CD8-positive, alpha-beta T cell (primary cell): ENCODE measurements at regions of chr9 and their contacts with region 1.

Region 1: GRCh38 chr9:94952565-94953373 is 226.3 kb downstream of the AOPEP start:
- DNase-seq: peak in 3 of 9 experiments; percentile 4 to 59 (median 15)
- ATAC-seq: peak; percentile 79
- H3K4me3 ChIP-seq: no peak overlapping the region
- H3K4me3 Mint-ChIP-seq: peak overlapping the region; percentile 61
- H3K27ac ChIP-seq: peak overlapping the region in 1 of 2 experiments; percentile 53
- H3K27ac Mint-ChIP-seq: peak overlapping the region; percentile 81
- H3K4me1 ChIP-seq: peaks cover 31% of the 10 kb centered on the region
- H3K4me1 Mint-ChIP-seq: peaks cover 37% of the 10 kb centered on the region
- H3K27me3 ChIP-seq: no peaks in the 10 kb centered on the region
- H3K27me3 Mint-ChIP-seq: no peaks in the 10 kb centered on the region
- CTCF ChIP-seq: no peak

Region 2: DNA sequence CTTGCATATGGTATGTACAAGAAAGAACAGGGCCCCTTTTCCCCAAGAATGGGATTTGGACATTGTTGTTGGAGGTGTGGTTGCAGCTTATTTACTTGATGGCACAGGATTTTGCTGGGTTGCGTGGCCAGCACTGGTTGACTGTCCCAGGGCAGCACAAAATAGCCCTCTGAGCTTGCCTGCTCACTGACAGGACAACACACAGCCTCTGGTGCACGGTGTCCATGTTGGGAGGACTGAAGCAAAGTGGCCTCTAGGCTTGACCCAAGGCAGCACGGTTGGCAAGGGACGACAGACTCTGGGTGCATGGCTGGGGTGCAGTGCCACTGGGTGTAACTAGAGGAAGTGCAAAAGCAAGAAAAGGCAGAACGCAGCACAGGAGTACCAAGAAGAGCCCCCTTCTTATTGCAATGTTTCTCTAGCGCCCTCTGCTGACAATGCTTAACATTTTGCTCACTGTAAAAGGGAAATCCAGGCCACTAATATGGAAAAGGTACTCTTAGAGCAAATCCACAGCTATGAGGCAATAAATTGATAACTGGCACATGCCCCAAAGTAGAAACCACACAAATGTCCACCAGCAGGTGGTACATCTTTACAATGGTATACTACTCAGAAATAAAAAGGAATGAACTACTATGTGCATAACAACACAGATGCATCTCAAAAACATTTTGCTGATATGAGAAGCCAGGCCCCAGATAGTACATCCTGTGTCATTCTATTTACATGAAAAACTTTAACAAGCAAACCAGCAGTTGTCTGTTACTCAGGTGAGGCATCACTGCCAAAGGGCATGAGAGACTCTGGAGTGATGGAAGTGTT is 950.2 kb before region 1 on chr9:
- CTCF ChIA-PET with region 1: no interaction called
- POLR2A ChIA-PET with region 1: no interaction called
- intact Hi-C with region 1: loop called in 1 of 2 experiments (anchors 5 kb)
- DNase-seq: peak in 3 of 9 experiments; percentile 19 to 49 (median 37)
- ATAC-seq: peak; percentile 29
- H3K4me3 ChIP-seq: no peak overlapping the region
- H3K4me3 Mint-ChIP-seq: no peak overlapping the region
- H3K27ac ChIP-seq: no peak overlapping the region
- H3K27ac Mint-ChIP-seq: no peak overlapping the region
- H3K4me1 ChIP-seq: no peaks in the 10 kb centered on the region
- H3K4me1 Mint-ChIP-seq: no peaks in the 10 kb centered on the region
- H3K27me3 ChIP-seq: no peaks in the 10 kb centered on the region
- H3K27me3 Mint-ChIP-seq: peaks cover 18% of the 10 kb centered on the region
- CTCF ChIP-seq: peak; percentile 35

Region 3: GRCh38 chr9:94870793-94871558 is 81.8 kb before region 1 on chr9:
- CTCF ChIA-PET with region 1: no interaction called
- POLR2A ChIA-PET with region 1: no interaction called
- intact Hi-C with region 1: loop called in 1 of 2 experiments (anchors 2 kb)
- DNase-seq: peak in 7 of 9 experiments; percentile 11 to 93 (median 47)
- ATAC-seq: peak; percentile 88
- H3K4me3 ChIP-seq: peak overlapping the region in 1 of 2 experiments; percentile 7
- H3K4me3 Mint-ChIP-seq: peak overlapping the region; percentile 59
- H3K27ac ChIP-seq: peak overlapping the region; percentile 26 to 55
- H3K27ac Mint-ChIP-seq: peak overlapping the region; percentile 94
- H3K4me1 ChIP-seq: peaks cover 26% of the 10 kb centered on the region
- H3K4me1 Mint-ChIP-seq: peaks cover 31% of the 10 kb centered on the region
- H3K27me3 ChIP-seq: no peaks in the 10 kb centered on the region
- H3K27me3 Mint-ChIP-seq: no peaks in the 10 kb centered on the region
- CTCF ChIP-seq: no peak

Region 4: DNA sequence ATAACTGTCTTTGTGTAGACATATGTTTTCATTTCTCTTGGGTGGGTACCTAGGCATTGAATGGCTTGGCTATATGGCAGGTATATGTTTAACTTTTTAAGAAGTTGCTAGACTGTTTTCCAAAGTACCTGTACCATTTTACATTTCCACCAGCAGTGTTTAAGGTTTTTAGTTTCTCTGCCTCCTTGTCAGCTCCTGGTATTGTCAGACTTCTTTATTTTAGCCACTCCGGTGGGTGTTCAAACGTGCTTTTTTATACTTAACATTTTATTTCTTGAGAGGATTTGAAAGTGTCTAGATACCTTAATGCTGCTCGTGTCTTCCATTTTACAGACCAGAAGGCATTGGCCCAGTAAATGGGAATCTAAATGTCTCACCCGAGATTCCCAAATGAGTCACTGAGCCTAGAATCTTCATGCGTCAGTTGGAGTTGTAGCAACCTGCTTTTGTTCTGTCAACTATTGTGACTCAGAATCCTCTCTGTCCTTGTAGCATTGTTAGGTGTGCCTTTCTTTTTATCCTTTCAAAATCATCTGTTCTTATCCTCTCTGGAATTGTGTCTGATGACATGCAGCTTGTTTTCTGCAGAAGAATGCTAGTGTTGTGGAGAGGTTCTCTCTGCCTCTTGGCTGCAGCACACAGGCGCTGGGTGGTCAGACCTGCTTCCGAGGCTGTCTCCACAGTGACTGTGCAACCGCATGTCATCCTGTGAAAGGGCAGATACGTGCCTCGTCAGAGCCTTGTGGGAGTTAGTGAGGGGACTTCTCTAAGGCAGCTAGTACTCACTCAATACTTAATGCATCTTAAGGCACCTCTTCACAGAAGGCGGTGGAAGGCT is 65.5 kb after region 1 on chr9:
- CTCF ChIA-PET with region 1: no interaction called
- POLR2A ChIA-PET with region 1: no interaction called
- intact Hi-C with region 1: loop called in 1 of 2 experiments (anchors 10 kb)
- DNase-seq: no peak
- ATAC-seq: no peak
- H3K4me3 ChIP-seq: no peak overlapping the region
- H3K4me3 Mint-ChIP-seq: no peak overlapping the region
- H3K27ac ChIP-seq: no peak overlapping the region
- H3K27ac Mint-ChIP-seq: no peak overlapping the region
- H3K4me1 ChIP-seq: no peaks in the 10 kb centered on the region
- H3K4me1 Mint-ChIP-seq: no peaks in the 10 kb centered on the region
- H3K27me3 ChIP-seq: no peaks in the 10 kb centered on the region
- H3K27me3 Mint-ChIP-seq: no peaks in the 10 kb centered on the region
- CTCF ChIP-seq: no peak

Region 5: DNA sequence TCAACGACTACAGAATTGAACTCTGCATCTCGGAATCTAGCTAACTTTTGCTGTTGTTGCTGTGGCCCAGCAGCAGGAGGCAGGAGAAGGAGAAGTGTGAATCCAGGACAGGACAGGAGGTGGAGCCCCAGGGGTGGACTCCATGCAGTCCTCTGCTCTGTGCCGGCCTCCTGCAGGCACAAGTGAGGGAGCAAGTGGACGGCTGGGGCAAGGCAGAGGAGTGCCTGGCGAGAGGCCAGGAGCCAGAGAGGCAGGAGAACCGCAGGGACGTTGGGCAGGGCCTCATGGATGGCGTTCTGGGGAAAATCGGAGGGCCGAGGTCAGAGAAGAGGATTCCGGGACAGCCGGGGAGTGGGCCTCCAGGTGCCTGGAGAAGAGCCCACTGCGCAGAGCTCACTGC is 150.6 kb after region 1 on chr9:
- CTCF ChIA-PET with region 1: no interaction called
- POLR2A ChIA-PET with region 1: no interaction called
- intact Hi-C with region 1: no loop called
- DNase-seq: no peak
- ATAC-seq: no peak
- H3K4me3 ChIP-seq: no peak overlapping the region
- H3K4me3 Mint-ChIP-seq: no peak overlapping the region
- H3K27ac ChIP-seq: no peak overlapping the region
- H3K27ac Mint-ChIP-seq: no peak overlapping the region
- H3K4me1 ChIP-seq: no peaks in the 10 kb centered on the region
- H3K4me1 Mint-ChIP-seq: no peaks in the 10 kb centered on the region
- H3K27me3 ChIP-seq: no peaks in the 10 kb centered on the region
- H3K27me3 Mint-ChIP-seq: no peaks in the 10 kb centered on the region
- CTCF ChIP-seq: no peak

Region 6: DNA sequence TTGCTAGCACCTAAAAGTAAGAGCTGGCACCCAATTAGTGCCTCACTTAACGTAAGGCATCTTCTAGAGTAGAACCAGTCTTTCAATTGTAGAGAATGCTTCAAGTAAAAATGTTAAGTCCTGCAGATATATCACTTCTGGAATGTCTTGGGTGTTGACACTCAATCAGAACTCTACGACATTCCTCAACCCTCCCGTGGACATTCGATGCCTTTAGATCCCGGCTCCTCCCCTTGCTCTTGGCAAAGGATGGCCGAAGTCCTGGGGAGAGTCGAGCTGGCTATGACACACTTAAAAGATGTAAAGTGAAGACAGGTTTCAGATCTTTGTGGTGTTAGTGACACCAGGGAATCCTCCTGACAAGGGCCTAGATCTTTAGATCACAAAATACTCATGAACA is 835.3 kb after region 1 on chr9:
- CTCF ChIA-PET with region 1: no interaction called
- POLR2A ChIA-PET with region 1: no interaction called
- intact Hi-C with region 1: no loop called
- DNase-seq: no peak
- ATAC-seq: no peak
- H3K4me3 ChIP-seq: no peak overlapping the region
- H3K4me3 Mint-ChIP-seq: no peak overlapping the region
- H3K27ac ChIP-seq: no peak overlapping the region
- H3K27ac Mint-ChIP-seq: no peak overlapping the region
- H3K4me1 ChIP-seq: no peaks in the 10 kb centered on the region
- H3K4me1 Mint-ChIP-seq: peaks cover 4% of the 10 kb centered on the region
- H3K27me3 ChIP-seq: no peaks in the 10 kb centered on the region
- H3K27me3 Mint-ChIP-seq: peaks cover 5% of the 10 kb centered on the region
- CTCF ChIP-seq: no peak